Uterus (tissue), 4 donors: ENCODE measurements at regions of chr3 and their contacts with region 1.

Region 1: DNA sequence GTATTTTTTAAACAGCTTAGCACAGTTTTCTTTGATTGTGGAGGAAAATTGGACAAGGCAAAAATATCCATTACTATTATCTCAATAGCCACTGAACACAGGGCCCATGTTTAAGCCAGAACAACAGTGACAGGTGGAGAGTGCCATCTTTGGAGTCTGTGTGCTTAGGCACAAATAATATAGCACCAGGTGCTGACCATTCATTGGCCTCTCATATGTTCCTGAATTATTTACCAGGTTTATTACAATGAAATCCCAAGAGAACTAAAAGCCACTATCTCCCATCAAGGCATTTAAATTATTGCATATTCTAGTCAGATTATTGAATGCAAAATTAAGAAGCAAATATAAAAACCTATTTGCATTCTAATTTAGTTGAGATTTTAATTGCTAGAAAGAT is 39.6 kb downstream of the GPR156 start:
- DNase-seq: no peak
- H3K4me3 ChIP-seq: no peak overlapping the region
- H3K27ac ChIP-seq: no peak overlapping the region
- H3K4me1 ChIP-seq: no peaks in the 10 kb centered on the region
- H3K27me3 ChIP-seq: no peaks in the 10 kb centered on the region
- CTCF ChIP-seq: no peak
- POLR2A ChIP-seq: no peak

Region 2: DNA sequence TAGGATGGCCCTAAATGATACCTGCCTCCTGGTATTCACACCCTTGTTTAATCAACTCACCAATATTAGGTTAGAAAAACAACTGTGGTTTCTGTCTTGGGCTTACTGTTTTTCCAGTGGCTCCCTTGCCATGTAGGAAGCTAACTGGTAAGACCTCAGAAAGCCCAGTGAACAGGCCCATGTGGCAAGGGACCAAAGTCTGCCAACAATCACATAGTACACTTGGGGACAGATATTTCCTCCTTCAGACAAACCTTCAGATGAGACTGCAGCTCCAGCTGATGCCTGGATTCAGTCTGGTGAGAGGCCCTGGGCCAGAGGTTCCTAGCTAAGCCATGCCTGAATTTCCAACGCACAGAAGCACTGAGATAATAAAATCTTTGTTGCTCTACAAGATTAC is 247.2 kb before region 1 on chr3:
- intact Hi-C with region 1: no loop called
- DNase-seq: no peak
- H3K4me3 ChIP-seq: no peak overlapping the region
- H3K27ac ChIP-seq: no peak overlapping the region
- H3K4me1 ChIP-seq: no peaks in the 10 kb centered on the region
- H3K27me3 ChIP-seq: no peaks in the 10 kb centered on the region
- CTCF ChIP-seq: no peak
- POLR2A ChIP-seq: no peak

Region 3: DNA sequence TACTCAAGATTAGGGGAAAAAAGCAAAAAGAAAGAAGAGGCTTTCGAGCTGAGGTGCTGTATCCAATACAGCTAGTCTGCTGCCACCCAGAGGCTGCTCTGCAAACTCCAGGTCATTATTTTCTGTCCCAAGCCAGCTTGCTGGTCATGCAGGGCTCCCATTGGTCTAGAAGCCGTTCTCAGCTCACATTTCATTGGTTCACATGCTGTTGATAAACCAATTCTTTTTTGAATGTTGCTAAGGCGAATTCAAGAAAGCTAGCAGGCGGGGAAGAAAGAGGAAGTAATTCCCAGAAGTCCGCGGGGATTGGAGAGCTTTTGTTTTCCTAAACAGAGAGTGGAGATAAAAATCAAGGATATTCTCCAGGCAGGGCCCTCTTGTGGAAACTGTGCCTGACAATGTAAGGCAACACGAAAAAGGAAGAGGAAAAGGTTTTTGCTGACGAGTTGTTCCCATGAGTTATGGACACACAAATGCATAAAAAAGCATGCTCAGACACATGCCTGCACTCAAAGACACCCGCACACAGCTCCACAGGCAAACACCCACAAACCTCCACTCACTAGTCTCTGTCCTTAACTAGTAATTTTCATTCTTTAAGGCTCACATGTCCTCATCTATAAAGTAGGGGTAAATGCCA is 172.0 kb after region 1 on chr3:
- intact Hi-C with region 1: loop called (anchors 10 kb)
- DNase-seq: peak; percentile 88 to 94
- H3K4me3 ChIP-seq: peak overlapping the region; percentile 11 to 27
- H3K27ac ChIP-seq: peak overlapping the region; percentile 50 to 80
- H3K4me1 ChIP-seq: peaks cover 10 to 14% of the 10 kb centered on the region in 2 donors
- H3K27me3 ChIP-seq: no peaks in the 10 kb centered on the region
- CTCF ChIP-seq: peak; percentile 79 to 91 (median 86)
- POLR2A ChIP-seq: peak in 1 of 2 donors; percentile 53

Region 4: DNA sequence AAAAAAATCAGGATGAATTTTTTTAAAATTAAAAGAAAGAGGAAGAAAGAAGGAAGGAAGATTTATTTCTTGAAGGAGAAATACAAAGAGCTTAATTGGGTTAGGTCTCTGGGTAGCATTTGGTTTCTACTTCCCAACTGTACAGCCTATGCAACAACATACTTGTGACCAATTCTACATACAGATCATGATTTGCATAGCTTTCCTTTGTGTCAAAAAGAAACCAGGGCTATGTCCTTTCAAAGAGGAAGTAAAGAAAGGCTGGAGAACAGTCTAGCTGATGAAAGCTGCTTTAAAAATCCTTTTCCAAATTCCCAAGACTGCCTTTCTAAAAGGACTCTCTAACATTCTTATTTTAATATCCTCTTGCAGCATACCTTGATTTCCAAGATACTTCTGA is 442.7 kb after region 1 on chr3:
- intact Hi-C with region 1: no loop called
- DNase-seq: no peak
- H3K4me3 ChIP-seq: no peak overlapping the region
- H3K27ac ChIP-seq: no peak overlapping the region
- H3K4me1 ChIP-seq: no peaks in the 10 kb centered on the region
- H3K27me3 ChIP-seq: no peaks in the 10 kb centered on the region
- CTCF ChIP-seq: no peak
- POLR2A ChIP-seq: no peak